Activated CD4-positive, alpha-beta T cell treated with anti-CD3 and anti-CD28 coated beads for 36 hours (primary cell): ENCODE measurements at regions of chr1 and their contacts with region 1.

Region 1: DNA sequence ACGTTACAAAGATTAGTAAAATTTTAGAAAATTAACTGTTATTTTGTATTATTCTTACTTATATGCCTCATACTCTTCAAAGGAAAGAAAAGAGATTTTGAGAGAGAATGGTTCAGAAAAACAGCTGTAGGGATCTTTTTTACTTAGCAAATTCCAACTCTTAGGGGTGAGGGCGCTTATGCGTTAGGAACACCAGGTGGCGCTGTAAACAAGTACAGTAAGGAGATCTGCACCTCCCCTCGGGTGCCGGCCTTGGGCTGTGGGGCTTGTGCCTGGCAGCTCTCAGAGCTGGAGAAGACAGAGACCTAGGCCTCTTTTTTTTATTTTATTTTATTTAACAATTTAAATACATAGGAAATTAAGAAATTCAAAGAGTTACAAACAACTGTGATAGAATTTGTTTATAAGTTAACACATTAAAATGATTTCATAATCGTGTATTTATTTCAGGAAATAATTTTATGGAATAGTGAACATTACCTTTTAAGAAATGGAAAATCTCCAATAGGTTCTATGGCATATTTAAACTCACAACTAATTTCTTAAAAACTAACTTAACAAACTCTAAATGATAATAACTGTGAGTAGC is 32.6 kb downstream of the UTP25 start:
- DNase-seq: peak; percentile 86
- ATAC-seq: peak; percentile 95
- H3K4me3 Mint-ChIP-seq: no peak overlapping the region
- H3K27ac Mint-ChIP-seq: no peak overlapping the region
- H3K4me1 Mint-ChIP-seq: no peaks in the 10 kb centered on the region
- H3K27me3 Mint-ChIP-seq: peaks cover 4% of the 10 kb centered on the region

Region 2: GRCh38 chr1:209839875-209840491 is 20.4 kb before region 1 on chr1:
- CTCF ChIA-PET with region 1: interaction called, 29 read pairs
- POLR2A ChIA-PET with region 1: no interaction called
- intact Hi-C with region 1: no loop called
- DNase-seq: peak; percentile 29
- ATAC-seq: peak; percentile 77
- H3K4me3 Mint-ChIP-seq: no peak overlapping the region
- H3K27ac Mint-ChIP-seq: peak overlapping the region; percentile 72
- H3K4me1 Mint-ChIP-seq: peaks cover 46% of the 10 kb centered on the region
- H3K27me3 Mint-ChIP-seq: no peaks in the 10 kb centered on the region

Region 3: DNA sequence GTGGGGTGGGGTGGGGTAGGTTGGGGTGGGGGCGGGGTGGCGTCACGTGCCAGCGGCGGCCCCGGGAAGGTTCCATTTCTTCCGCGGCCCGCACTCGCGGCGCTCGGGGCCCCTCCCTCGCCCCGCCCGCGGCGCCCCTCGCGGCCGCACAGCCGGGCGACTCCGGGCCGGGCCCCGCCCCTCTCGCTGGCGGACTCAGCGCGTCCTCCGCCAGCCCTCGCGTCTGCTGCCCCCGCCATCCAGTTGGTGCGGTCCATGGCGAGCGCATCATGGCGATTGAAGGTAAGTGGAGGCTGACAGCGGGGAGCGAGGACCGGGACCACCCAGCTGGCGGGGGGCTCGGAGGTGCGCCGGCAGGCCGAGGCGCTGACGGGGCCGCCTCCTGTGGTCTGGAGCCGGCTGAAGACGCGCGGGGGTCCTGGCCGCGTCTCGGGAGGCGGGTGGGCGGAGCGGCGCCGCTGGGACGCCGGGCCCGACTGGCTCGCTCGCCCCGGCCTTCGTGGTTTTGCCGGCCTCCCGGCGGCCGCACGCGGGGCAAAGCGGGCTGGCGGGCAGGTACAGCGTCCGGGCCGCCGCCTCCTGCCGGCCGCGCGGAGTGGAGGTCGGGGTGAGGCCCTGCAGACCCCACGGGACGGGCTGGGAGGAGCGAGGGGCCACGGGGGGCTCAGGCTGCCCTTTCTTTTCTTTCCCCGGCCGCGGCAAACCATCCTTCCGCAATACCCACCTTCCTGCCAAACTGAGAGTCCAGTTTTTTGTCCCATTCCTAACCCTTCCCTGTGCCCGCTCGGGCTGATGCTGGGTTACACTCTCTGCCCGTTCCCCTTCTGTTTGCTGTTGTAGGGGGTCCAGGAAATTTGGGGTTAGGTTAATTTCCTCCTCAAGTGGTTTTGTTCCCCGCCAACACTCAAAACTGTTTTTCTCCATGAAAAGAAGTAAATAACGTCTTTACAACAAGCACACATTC is 77.9 kb after region 1 on chr1 and contains the start of gene SYT14:
- CTCF ChIA-PET with region 1: interaction called, 5 read pairs
- POLR2A ChIA-PET with region 1: no interaction called
- intact Hi-C with region 1: loop called (anchors 2 to 5 kb)
- DNase-seq: peak; percentile 18
- ATAC-seq: peak; percentile 49
- H3K4me3 Mint-ChIP-seq: peak within 1 kb of the TSS; percentile 48
- H3K27ac Mint-ChIP-seq: no peak within 1 kb of the TSS
- H3K4me1 Mint-ChIP-seq: peaks cover 11% of the 10 kb centered on the region
- H3K27me3 Mint-ChIP-seq: peaks cover 57% of the 10 kb centered on the region
- total RNA-seq, gene SYT14: not detected

Region 4: GRCh38 chr1:209989525-209989924 is 129.1 kb after region 1 on chr1:
- CTCF ChIA-PET with region 1: interaction called, 14 read pairs
- POLR2A ChIA-PET with region 1: no interaction called
- intact Hi-C with region 1: loop called (anchors 1 kb)
- DNase-seq: no peak
- ATAC-seq: no peak
- H3K4me3 Mint-ChIP-seq: no peak overlapping the region
- H3K27ac Mint-ChIP-seq: no peak overlapping the region
- H3K4me1 Mint-ChIP-seq: no peaks in the 10 kb centered on the region
- H3K27me3 Mint-ChIP-seq: peaks cover 20% of the 10 kb centered on the region

Region 5: GRCh38 chr1:210143465-210144062 is 283.2 kb after region 1 on chr1:
- CTCF ChIA-PET with region 1: no interaction called
- POLR2A ChIA-PET with region 1: no interaction called
- intact Hi-C with region 1: loop called in 1 of 2 experiments (anchors 10 kb)
- DNase-seq: peak; percentile 80
- ATAC-seq: no peak
- H3K4me3 Mint-ChIP-seq: no peak overlapping the region
- H3K27ac Mint-ChIP-seq: no peak overlapping the region
- H3K4me1 Mint-ChIP-seq: no peaks in the 10 kb centered on the region
- H3K27me3 Mint-ChIP-seq: peaks cover 27% of the 10 kb centered on the region

Region 6: GRCh38 chr1:210311726-210312493 is 451.5 kb after region 1 on chr1:
- CTCF ChIA-PET with region 1: no interaction called
- POLR2A ChIA-PET with region 1: no interaction called
- intact Hi-C with region 1: loop called (anchors 1 kb)
- DNase-seq: no peak
- ATAC-seq: no peak
- H3K4me3 Mint-ChIP-seq: peak overlapping the region; percentile 68
- H3K27ac Mint-ChIP-seq: peak overlapping the region; percentile 10
- H3K4me1 Mint-ChIP-seq: peaks cover 6% of the 10 kb centered on the region
- H3K27me3 Mint-ChIP-seq: peaks cover 17% of the 10 kb centered on the region